Activated CD8-positive, alpha-beta memory T cell treated with anti-CD3 and anti-CD28 coated beads, Interleukin-2, amount 10 ng/mL, durations not matched to agents 7 days and 5 days (primary cell): ENCODE measurements at regions of chr5 and their contacts with region 1.

Region 1: GRCh38 chr5:141636413-141637122 is at the starts of genes HDAC3 and RELL2:
- DNase-seq: peak; percentile 95
- ATAC-seq: peak; percentile 82
- H3K4me3 Mint-ChIP-seq: peak within 1 kb of the TSS; percentile 93
- H3K27ac Mint-ChIP-seq: peak within 1 kb of the TSS; percentile 94
- H3K4me1 Mint-ChIP-seq: peaks cover 58% of the 10 kb centered on the region
- H3K27me3 Mint-ChIP-seq: no peaks in the 10 kb centered on the region
- total RNA-seq, gene HDAC3: 87.1 to 90.0 TPM
- total RNA-seq, gene RELL2: 28.0 to 35.8 TPM

Region 2: GRCh38 chr5:141564216-141564692 is 72.3 kb before region 1 on chr5:
- CTCF ChIA-PET with region 1: interaction called, 22 read pairs
- DNase-seq: peak; percentile 79
- ATAC-seq: peak; percentile 95
- H3K4me3 Mint-ChIP-seq: no peak overlapping the region
- H3K27ac Mint-ChIP-seq: peak overlapping the region; percentile 85
- H3K4me1 Mint-ChIP-seq: peaks cover 24% of the 10 kb centered on the region
- H3K27me3 Mint-ChIP-seq: no peaks in the 10 kb centered on the region

Region 3: GRCh38 chr5:141598391-141599350 is 37.9 kb before region 1 on chr5:
- CTCF ChIA-PET with region 1: interaction called, 121 read pairs
- DNase-seq: no peak
- ATAC-seq: peak; percentile 75
- H3K4me3 Mint-ChIP-seq: no peak overlapping the region
- H3K27ac Mint-ChIP-seq: peak overlapping the region; percentile 67
- H3K4me1 Mint-ChIP-seq: peaks cover 70% of the 10 kb centered on the region
- H3K27me3 Mint-ChIP-seq: no peaks in the 10 kb centered on the region

Region 4: DNA sequence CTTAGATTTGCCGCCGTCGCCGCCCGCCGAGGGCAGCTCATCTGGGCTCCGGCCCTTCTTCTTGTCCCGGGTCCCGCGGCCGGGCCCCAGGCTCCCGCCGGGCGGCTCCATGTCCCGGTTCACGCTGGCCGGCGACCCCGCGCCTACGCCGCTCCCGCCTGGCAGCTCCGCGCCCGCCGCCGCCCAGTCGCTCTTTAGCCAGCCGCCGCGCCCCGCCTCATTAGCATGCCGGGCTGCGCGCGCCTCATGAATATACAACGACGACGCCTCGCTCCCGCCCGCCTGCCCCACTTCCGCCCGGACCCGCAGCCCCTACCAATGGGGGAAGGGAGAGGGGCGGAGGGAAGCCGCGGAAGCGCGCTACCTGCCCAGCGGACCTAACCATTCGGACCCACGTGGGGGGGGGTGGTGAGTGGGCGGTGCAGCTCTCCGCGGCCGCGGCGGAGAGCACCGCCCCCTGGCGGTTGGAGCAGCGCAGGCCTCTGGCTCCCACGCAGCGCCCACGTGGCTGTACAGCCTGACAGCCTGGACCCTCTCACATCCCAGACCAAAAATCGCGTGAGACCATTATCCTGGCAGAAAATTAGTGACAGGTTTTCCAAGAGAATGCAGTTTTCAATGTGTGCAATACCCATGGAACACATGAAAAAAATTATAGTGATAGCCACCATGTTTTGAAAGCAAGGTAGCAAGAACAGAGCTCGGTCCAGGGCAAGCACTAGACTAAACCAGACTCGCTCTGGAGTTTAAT is 17.6 kb before region 1 on chr5 and contains the start of gene DIAPH1:
- CTCF ChIA-PET with region 1: interaction called, 171 read pairs
- DNase-seq: peak; percentile 98
- ATAC-seq: peak; percentile 93
- H3K4me3 Mint-ChIP-seq: peak within 1 kb of the TSS; percentile 100
- H3K27ac Mint-ChIP-seq: peak within 1 kb of the TSS; percentile 98
- H3K4me1 Mint-ChIP-seq: peaks cover 55% of the 10 kb centered on the region
- H3K27me3 Mint-ChIP-seq: no peaks in the 10 kb centered on the region
- total RNA-seq, gene DIAPH1: 284 to 295 TPM

Region 5: GRCh38 chr5:141664732-141665461 is 28.3 kb after region 1 on chr5:
- CTCF ChIA-PET with region 1: interaction called, 14 read pairs
- DNase-seq: peak; percentile 81
- ATAC-seq: peak; percentile 93
- H3K4me3 Mint-ChIP-seq: no peak overlapping the region
- H3K27ac Mint-ChIP-seq: no peak overlapping the region
- H3K4me1 Mint-ChIP-seq: peaks cover 2% of the 10 kb centered on the region
- H3K27me3 Mint-ChIP-seq: no peaks in the 10 kb centered on the region

Region 6: DNA sequence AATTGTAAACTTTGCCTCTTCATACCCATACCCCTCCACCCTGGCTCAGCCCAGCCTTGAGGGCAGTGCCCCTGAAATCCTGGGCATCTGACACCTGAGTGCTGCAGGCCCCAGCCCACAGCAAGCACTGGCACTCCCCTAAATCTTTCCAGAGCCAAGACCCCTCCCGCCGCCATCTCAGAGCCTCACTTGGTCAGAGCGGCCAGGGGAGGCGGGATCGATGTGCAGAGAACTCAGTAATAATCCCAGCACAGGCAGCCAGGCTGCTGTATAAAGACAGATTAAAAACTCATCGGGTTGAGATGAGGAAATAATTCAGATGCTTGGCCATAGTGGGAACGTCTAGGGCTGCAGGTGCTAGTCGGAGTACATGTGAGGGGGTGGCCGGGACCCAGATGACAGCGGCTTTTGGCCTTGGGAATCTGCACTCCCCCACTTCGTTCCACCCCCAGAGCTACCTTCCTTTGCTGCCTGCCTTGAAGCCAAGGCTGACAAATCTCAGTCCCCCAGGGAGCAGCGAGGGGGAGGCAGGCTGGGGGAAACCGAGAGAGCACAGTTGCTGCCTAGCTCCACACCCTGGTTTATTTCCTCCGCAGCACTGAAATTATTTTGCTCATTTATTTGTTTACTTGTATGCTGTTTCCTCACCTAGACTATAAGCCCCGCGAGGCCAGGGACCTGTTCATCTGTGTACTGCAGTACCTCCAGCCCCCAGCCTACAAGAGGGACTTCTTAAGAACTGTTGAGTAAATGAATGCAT is 65.0 kb after region 1 on chr5:
- CTCF ChIA-PET with region 1: no interaction called
- DNase-seq: no peak
- ATAC-seq: peak; percentile 28
- H3K4me3 Mint-ChIP-seq: peak overlapping the region; percentile 62
- H3K27ac Mint-ChIP-seq: no peak overlapping the region
- H3K4me1 Mint-ChIP-seq: peaks cover 22% of the 10 kb centered on the region
- H3K27me3 Mint-ChIP-seq: peaks cover 42% of the 10 kb centered on the region